CD4-positive, alpha-beta memory T cell (primary cell): ENCODE measurements at regions of chr2 and their contacts with region 1.

Region 1: DNA sequence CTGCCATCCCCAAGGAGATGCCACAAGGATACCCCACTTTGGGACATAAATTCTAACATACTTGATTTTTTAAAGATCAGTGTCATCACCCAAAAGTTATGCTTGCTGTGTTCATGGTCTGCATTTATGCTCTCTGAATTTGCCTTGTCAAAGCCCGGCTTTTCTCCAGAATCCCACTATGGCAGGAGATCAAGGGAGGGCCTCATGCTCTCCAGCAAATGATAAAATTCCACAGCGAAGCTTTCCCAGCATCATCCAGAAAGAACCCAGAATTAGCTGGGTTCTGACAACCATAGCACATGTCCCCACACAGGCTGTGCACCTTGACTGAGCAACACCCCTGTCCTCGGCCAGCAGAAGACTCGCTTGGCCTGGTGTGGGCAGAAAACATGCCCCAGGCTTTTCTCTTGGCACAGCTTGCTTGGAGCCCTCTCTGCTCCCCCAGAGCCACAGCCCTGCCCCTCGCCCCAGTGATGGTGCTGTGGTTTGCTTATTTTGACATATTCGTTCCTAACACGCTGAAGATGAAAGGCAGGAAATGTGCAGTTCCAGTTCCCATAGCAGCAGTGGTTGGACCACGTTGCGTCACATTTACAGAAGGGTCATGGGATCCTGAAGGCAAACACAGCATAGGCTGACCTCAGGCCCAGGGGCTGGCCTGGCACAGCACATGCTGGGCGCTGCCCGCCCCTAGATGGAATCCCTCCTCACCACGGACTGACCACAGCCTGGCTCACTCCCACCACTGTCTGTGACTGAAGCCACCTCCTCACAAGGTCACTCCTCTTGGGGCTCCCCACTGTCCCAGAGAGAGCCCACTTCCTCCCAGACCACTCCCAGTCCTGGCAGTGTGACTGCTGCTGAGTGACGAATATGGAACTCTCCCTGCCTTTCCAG is 14.1 kb upstream of the CHRNA1 start:
- DNase-seq: peak; percentile 90 to 95 (median 93)
- H3K4me3 ChIP-seq: no peak overlapping the region
- H3K4me3 Mint-ChIP-seq: peak overlapping the region; percentile 29 to 84 (median 70)
- H3K27ac ChIP-seq: peak overlapping the region; percentile 57
- H3K27ac Mint-ChIP-seq: peak overlapping the region; percentile 91 to 99 (median 98)
- H3K4me1 ChIP-seq: peaks cover 50% of the 10 kb centered on the region
- H3K4me1 Mint-ChIP-seq: peaks cover 35 to 60% (median 47%) of the 10 kb centered on the region in 4 donors
- H3K27me3 ChIP-seq: no peaks in the 10 kb centered on the region
- H3K27me3 Mint-ChIP-seq: no peaks in the 10 kb centered on the region

Region 2: DNA sequence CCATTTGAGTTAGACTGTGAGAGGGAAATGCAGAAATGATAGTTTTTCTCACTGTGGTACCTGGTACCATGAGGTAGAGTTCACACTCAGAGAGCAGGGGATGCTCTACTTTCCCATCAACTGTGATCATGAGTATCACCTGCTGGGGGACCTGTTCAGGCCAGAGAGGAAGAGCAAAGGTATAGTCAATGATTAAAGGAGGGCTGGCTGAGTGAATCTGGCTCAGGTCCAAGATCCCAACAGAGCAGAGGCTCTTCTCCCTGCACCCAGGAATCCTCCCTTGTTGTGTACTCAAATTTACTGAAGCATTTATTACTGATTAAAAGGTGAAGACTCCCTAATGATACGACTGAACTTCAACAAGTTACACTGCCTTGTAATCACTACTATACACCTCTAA is 90.5 kb after region 1 on chr2:
- CTCF ChIA-PET with region 1: no interaction called
- POLR2A ChIA-PET with region 1: no interaction called
- intact Hi-C with region 1: no loop called
- DNase-seq: no peak
- H3K4me3 ChIP-seq: no peak overlapping the region
- H3K4me3 Mint-ChIP-seq: no peak overlapping the region
- H3K27ac ChIP-seq: no peak overlapping the region
- H3K27ac Mint-ChIP-seq: no peak overlapping the region
- H3K4me1 ChIP-seq: no peaks in the 10 kb centered on the region
- H3K4me1 Mint-ChIP-seq: peaks cover 0 to 1% (median 0%) of the 10 kb centered on the region in 4 donors
- H3K27me3 ChIP-seq: no peaks in the 10 kb centered on the region
- H3K27me3 Mint-ChIP-seq: peaks cover 0 to 3% of the 10 kb centered on the region in 2 donors

Region 3: DNA sequence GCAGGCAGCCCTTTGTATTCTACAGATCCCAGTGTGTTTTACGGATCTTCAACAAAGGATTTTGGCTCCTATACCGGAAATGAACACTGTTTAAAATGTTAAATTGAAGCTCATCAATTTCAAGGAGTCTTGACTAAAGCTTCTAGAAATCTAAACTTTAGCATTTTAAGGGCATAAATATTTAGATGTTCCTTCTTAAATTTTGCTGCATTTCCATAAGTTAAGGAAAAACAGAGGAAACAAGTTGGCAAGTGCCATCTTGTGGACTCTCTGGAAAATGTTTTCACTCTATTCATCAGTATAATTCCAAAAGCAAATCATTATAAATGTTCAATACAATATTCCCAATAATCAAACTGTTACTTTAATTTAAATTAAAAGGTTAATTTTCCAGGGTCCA is 207.3 kb after region 1 on chr2:
- CTCF ChIA-PET with region 1: interaction called, 70 read pairs
- POLR2A ChIA-PET with region 1: no interaction called
- intact Hi-C with region 1: no loop called
- DNase-seq: no peak
- H3K4me3 ChIP-seq: no peak overlapping the region
- H3K4me3 Mint-ChIP-seq: no peak overlapping the region
- H3K27ac ChIP-seq: no peak overlapping the region
- H3K27ac Mint-ChIP-seq: no peak overlapping the region
- H3K4me1 ChIP-seq: no peaks in the 10 kb centered on the region
- H3K4me1 Mint-ChIP-seq: peaks cover 4 to 8% (median 6%) of the 10 kb centered on the region in 4 donors
- H3K27me3 ChIP-seq: peaks cover 3% of the 10 kb centered on the region
- H3K27me3 Mint-ChIP-seq: peaks cover 2 to 3% of the 10 kb centered on the region in 2 donors